ENCODE measurements at regions of chr5 and their contacts with region 1.

Region 1: GRCh38 chr5:17216176-17216973 is 1.1 kb upstream of the BASP1 start:
- DNase-seq: peak; percentile 56 to 79 (median 68)
- ATAC-seq: peak in 3 of 4 donors; percentile 60 to 68 (median 66)
- H3K4me3 ChIP-seq: peak overlapping the region in 7 of 12 donors; percentile 2 to 51 (median 19)
- H3K27ac ChIP-seq: no peak overlapping the region
- H3K4me1 ChIP-seq: peaks cover 0 to 28% (median 9%) of the 10 kb centered on the region in 12 donors
- H3K27me3 ChIP-seq: peaks cover 4 to 77% (median 34%) of the 10 kb centered on the region in 9 donors
- CTCF ChIP-seq: peak; percentile 47 to 81 (median 71)
- POLR2A ChIP-seq: no peak

Region 2: DNA sequence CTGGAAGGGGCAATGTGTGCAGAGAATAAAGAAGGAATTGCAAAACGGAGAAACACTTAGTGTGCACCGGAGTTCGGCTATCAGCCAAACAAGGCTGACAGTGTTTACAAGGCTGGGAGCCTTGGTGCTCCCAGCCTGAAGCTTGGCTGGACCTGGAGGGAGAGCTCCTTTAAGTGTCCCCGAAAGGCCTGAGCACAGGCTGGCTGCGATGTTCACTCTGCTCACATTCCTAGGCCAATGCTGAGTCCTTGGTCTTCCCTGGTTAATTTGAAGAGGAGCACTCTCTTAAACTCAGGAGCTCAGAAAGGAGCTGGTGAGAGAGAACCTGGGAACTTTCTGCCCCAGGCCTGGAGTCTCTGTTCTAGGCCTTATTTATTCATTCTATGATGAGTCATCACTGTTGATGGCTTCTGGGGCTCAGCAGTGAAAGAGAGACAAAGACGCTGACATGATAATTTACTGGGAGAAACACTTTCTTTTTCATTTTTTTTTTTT is 191.6 kb before region 1 on chr5:
- intact Hi-C with region 1: no loop called
- DNase-seq: no peak
- ATAC-seq: no peak
- H3K4me3 ChIP-seq: no peak overlapping the region
- H3K27ac ChIP-seq: no peak overlapping the region
- H3K4me1 ChIP-seq: peaks cover 0 to 15% (median 0%) of the 10 kb centered on the region in 12 donors
- H3K27me3 ChIP-seq: no peaks in the 10 kb centered on the region
- CTCF ChIP-seq: no peak
- POLR2A ChIP-seq: no peak

Region 3: DNA sequence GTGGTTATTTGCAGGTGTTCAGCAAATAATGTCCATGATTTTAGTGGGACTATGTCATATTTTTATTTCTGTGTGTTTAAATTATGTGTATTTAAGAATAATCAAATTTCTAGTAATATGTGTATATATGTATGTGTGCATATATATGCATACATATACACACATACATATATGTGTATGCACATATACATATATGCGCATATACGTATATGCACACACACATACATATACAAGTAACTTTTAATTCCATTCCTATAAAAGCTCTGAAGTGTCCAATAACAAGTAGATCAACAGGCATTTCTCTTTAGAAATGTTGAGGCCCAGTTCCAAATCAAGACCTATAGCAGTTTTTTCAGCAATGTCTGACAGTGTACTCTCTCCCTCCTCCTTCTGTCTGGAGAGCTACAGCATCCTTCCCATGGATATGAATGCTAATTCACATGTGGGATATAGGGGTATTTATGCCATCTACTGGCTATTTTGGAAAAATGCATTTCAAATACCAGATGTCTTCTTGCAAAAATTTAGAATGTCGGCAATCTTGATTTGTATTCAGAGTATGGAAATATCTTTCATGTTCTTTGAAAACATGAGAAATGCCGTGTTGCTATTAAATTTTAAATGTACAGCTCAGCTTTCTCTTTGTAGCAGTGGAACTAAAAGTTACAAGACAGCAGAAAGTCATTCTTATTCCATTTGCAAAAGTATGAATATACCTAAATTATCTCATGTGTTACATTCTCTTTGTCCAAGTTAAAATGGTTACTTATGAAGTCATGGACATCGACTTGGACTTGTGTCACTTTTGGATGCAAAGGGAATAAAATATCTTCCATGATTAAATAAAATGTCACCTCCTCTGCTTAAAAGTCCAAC is 1065.5 kb after region 1 on chr5:
- intact Hi-C with region 1: loop called in 1 of 10 experiments (anchors 10 kb)
- DNase-seq: no peak
- ATAC-seq: no peak
- H3K4me3 ChIP-seq: no peak overlapping the region
- H3K27ac ChIP-seq: no peak overlapping the region
- H3K4me1 ChIP-seq: no peaks in the 10 kb centered on the region
- H3K27me3 ChIP-seq: peaks cover 0 to 4% (median 0%) of the 10 kb centered on the region in 9 donors
- CTCF ChIP-seq: peak in 8 of 12 donors; percentile 11 to 44 (median 31)
- POLR2A ChIP-seq: no peak

Region 4: GRCh38 chr5:18305297-18305924 is 1089.0 kb after region 1 on chr5:
- intact Hi-C with region 1: loop called in 8 of 10 experiments (anchors 2 to 5 kb)
- DNase-seq: no peak
- ATAC-seq: no peak
- H3K4me3 ChIP-seq: no peak overlapping the region
- H3K27ac ChIP-seq: no peak overlapping the region
- H3K4me1 ChIP-seq: no peaks in the 10 kb centered on the region
- H3K27me3 ChIP-seq: peaks cover 0 to 16% (median 0%) of the 10 kb centered on the region in 9 donors
- CTCF ChIP-seq: peak; percentile 21 to 58 (median 44)
- POLR2A ChIP-seq: no peak

Region 5: DNA sequence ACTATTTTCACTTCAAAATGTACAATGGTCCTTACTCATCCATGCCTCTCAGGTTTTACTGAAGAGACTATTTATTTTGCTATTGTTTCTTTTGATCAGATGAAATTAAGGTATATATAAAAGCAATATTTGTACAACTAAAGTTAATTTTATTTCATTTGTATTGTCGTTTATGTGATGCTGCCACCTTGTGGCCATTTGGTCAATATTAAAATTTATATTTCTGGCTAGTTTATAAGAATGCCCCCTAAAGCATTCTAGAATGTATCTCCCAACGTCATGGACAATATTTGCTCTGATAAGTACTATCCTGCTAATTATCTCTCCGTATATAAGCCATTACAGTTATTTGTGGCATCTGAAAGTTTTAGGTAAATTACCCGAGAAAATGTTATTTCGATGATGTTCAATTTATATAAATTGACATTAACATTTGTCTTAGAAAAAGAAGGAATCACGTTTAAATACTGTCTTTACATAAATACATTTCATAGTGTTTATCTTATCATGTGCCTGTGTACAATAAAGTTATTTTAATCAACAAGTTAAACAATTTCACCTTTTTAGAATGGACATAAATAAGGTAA is 1097.9 kb after region 1 on chr5:
- intact Hi-C with region 1: loop called in 6 of 10 experiments (anchors 2 to 5 kb)
- DNase-seq: no peak
- ATAC-seq: no peak
- H3K4me3 ChIP-seq: no peak overlapping the region
- H3K27ac ChIP-seq: no peak overlapping the region
- H3K4me1 ChIP-seq: no peaks in the 10 kb centered on the region
- H3K27me3 ChIP-seq: peaks cover 0 to 9% (median 0%) of the 10 kb centered on the region in 9 donors
- CTCF ChIP-seq: peak; percentile 37 to 73 (median 60)
- POLR2A ChIP-seq: no peak

Measured in heart left ventricle (tissue), 16 donors.